Ovary (tissue), 10 donors: ENCODE measurements at regions of chr6 and their contacts with region 1.

Region 1: GRCh38 chr6:154805288-154805911 is 72.2 kb downstream of the SCAF8 start:
- DNase-seq: no peak
- H3K4me3 ChIP-seq: no peak overlapping the region
- H3K27ac ChIP-seq: no peak overlapping the region
- H3K4me1 ChIP-seq: no peaks in the 10 kb centered on the region
- H3K27me3 ChIP-seq: no peaks in the 10 kb centered on the region
- CTCF ChIP-seq: peak; percentile 14 to 59 (median 25)
- EP300 ChIP-seq: no peak
- POLR2A ChIP-seq: no peak

Region 2: GRCh38 chr6:154002894-154003293 is 802.5 kb before region 1 on chr6:
- intact Hi-C with region 1: no loop called
- DNase-seq: no peak
- H3K4me3 ChIP-seq: no peak overlapping the region
- H3K27ac ChIP-seq: no peak overlapping the region
- H3K4me1 ChIP-seq: no peaks in the 10 kb centered on the region
- H3K27me3 ChIP-seq: no peaks in the 10 kb centered on the region
- CTCF ChIP-seq: no peak
- EP300 ChIP-seq: no peak
- POLR2A ChIP-seq: no peak

Region 3: GRCh38 chr6:154675602-154676088 is 129.8 kb before region 1 on chr6:
- intact Hi-C with region 1: loop called (anchors 5 to 10 kb)
- DNase-seq: peak; percentile 80 to 89 (median 87)
- H3K4me3 ChIP-seq: no peak overlapping the region
- H3K27ac ChIP-seq: no peak overlapping the region
- H3K4me1 ChIP-seq: no peaks in the 10 kb centered on the region
- H3K27me3 ChIP-seq: no peaks in the 10 kb centered on the region
- CTCF ChIP-seq: peak; percentile 95 to 98 (median 98)
- EP300 ChIP-seq: no peak
- POLR2A ChIP-seq: no peak

Region 4: DNA sequence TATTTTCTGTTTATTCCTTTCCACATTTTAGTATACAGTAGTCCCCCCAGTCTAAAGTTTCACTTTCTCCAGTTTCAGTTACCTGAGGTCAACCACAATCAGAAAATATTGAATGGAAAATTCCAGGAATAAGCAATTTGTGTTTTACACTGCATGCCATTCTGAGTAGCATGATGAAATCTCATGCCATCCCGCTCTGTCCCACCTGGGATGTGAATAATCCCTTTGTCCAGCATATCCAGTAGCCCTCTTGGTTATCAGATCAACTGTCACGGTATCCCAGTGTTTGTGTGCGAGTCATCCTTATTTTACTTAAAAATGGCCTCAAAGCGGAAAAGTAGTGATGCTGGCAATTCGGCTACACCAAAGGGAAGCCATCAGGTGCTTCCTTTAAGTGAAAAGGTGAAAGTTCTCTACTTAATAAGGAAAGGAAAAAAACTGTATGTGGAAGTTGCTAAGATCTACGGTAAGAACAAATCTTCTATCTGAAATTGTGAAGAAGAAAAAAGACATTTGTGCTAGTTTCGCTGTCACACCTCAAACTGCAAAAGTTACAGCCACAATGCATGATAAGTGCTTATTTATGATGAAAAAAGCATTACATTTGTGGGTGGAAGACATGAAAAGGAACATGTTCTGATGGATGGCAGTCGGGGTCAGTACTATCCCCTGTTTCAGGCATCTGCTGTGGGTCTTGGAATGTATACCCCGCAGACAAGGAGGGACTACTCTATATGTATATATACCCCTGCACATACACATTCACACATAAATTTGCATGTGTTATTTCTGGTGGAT is 638.9 kb after region 1 on chr6:
- intact Hi-C with region 1: no loop called
- DNase-seq: no peak
- H3K4me3 ChIP-seq: no peak overlapping the region
- H3K27ac ChIP-seq: no peak overlapping the region
- H3K4me1 ChIP-seq: peaks cover 4% of the 10 kb centered on the region
- H3K27me3 ChIP-seq: no peaks in the 10 kb centered on the region
- CTCF ChIP-seq: no peak
- EP300 ChIP-seq: no peak
- POLR2A ChIP-seq: no peak